ENCODE measurements at regions of chr1 and their contacts with region 1.

Region 1: GRCh38 chr1:86470859-86471258 is 2.1 kb downstream of the CLCA1 start:
- DNase-seq: no peak
- H3K4me3 ChIP-seq: no peak overlapping the region
- H3K4me3 Mint-ChIP-seq: no peak overlapping the region
- H3K27ac ChIP-seq: no peak overlapping the region
- H3K27ac Mint-ChIP-seq: no peak overlapping the region
- H3K4me1 ChIP-seq: no peaks in the 10 kb centered on the region
- H3K4me1 Mint-ChIP-seq: peaks cover 0 to 3% (median 0%) of the 10 kb centered on the region in 4 donors
- H3K27me3 ChIP-seq: peaks cover 3% of the 10 kb centered on the region
- H3K27me3 Mint-ChIP-seq: peaks cover 6 to 7% of the 10 kb centered on the region in 2 donors

Region 2: DNA sequence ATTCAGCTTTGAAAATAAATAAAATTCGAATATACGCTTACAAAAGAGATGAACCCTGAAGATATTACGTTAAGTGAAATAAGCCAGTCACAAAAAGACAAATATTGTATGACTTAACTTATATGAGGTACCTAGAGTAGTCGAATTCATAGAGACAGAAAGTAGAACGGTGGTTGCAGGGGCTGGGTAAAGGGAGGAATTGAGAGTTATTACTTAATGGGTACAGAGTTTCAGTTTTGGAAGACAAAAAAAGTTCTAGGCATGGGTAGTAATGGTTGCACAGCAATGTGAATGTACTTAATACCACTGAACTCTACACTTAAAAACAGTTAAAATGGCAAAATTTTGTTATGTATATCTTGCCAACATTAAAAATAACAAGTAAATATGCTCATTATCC is 714.0 kb before region 1 on chr1:
- CTCF ChIA-PET with region 1: no interaction called
- POLR2A ChIA-PET with region 1: no interaction called
- intact Hi-C with region 1: no loop called
- DNase-seq: no peak
- H3K4me3 ChIP-seq: no peak overlapping the region
- H3K4me3 Mint-ChIP-seq: no peak overlapping the region
- H3K27ac ChIP-seq: no peak overlapping the region
- H3K27ac Mint-ChIP-seq: no peak overlapping the region
- H3K4me1 ChIP-seq: no peaks in the 10 kb centered on the region
- H3K4me1 Mint-ChIP-seq: no peaks in the 10 kb centered on the region
- H3K27me3 ChIP-seq: no peaks in the 10 kb centered on the region
- H3K27me3 Mint-ChIP-seq: no peaks in the 10 kb centered on the region

Region 3: GRCh38 chr1:86419277-86419903 is 51.5 kb before region 1 on chr1:
- CTCF ChIA-PET with region 1: interaction called, 3 read pairs
- POLR2A ChIA-PET with region 1: no interaction called
- intact Hi-C with region 1: loop called (anchors 5 kb)
- DNase-seq: peak; percentile 47 to 62 (median 52)
- H3K4me3 ChIP-seq: no peak overlapping the region
- H3K4me3 Mint-ChIP-seq: peak overlapping the region; percentile 57 to 86 (median 72)
- H3K27ac ChIP-seq: no peak overlapping the region
- H3K27ac Mint-ChIP-seq: peak overlapping the region in 3 of 7 donors; percentile 53 to 83 (median 78)
- H3K4me1 ChIP-seq: no peaks in the 10 kb centered on the region
- H3K4me1 Mint-ChIP-seq: peaks cover 2 to 6% (median 4%) of the 10 kb centered on the region in 4 donors
- H3K27me3 ChIP-seq: no peaks in the 10 kb centered on the region
- H3K27me3 Mint-ChIP-seq: peaks cover 2 to 9% of the 10 kb centered on the region in 2 donors

Region 4: GRCh38 chr1:86507935-86508582 is 37.2 kb after region 1 on chr1:
- CTCF ChIA-PET with region 1: interaction called, 26 read pairs
- POLR2A ChIA-PET with region 1: no interaction called
- intact Hi-C with region 1: loop called (anchors 2 kb)
- DNase-seq: peak in 4 of 5 donors; percentile 14 to 23 (median 17)
- H3K4me3 ChIP-seq: no peak overlapping the region
- H3K4me3 Mint-ChIP-seq: no peak overlapping the region
- H3K27ac ChIP-seq: no peak overlapping the region
- H3K27ac Mint-ChIP-seq: no peak overlapping the region
- H3K4me1 ChIP-seq: no peaks in the 10 kb centered on the region
- H3K4me1 Mint-ChIP-seq: peaks cover 0 to 9% (median 1%) of the 10 kb centered on the region in 4 donors
- H3K27me3 ChIP-seq: no peaks in the 10 kb centered on the region
- H3K27me3 Mint-ChIP-seq: peaks cover 8 to 11% of the 10 kb centered on the region in 2 donors

Region 5: DNA sequence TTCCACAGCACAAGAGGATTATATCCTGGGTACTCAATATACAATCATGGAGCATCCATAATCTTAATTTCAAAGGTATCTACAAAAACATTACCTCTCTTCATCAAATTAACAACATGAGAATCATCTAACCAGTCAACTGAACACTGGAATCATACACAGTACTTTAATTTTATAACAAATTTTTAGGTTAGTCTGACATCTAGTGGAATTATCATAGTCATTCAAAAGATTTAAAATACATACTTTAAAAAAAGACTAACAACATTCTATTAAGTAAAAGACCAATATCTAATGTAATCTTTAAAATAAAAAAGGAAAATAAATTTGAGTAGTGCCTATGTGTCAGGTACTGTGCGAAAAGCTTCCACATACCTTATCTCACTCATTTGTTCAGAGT is 216.7 kb after region 1 on chr1:
- CTCF ChIA-PET with region 1: interaction called, 3 read pairs
- POLR2A ChIA-PET with region 1: no interaction called
- intact Hi-C with region 1: loop called (anchors 10 kb)
- DNase-seq: no peak
- H3K4me3 ChIP-seq: no peak overlapping the region
- H3K4me3 Mint-ChIP-seq: no peak overlapping the region
- H3K27ac ChIP-seq: no peak overlapping the region
- H3K27ac Mint-ChIP-seq: no peak overlapping the region
- H3K4me1 ChIP-seq: no peaks in the 10 kb centered on the region
- H3K4me1 Mint-ChIP-seq: no peaks in the 10 kb centered on the region
- H3K27me3 ChIP-seq: no peaks in the 10 kb centered on the region
- H3K27me3 Mint-ChIP-seq: peaks cover 0 to 1% of the 10 kb centered on the region in 2 donors

Region 6: DNA sequence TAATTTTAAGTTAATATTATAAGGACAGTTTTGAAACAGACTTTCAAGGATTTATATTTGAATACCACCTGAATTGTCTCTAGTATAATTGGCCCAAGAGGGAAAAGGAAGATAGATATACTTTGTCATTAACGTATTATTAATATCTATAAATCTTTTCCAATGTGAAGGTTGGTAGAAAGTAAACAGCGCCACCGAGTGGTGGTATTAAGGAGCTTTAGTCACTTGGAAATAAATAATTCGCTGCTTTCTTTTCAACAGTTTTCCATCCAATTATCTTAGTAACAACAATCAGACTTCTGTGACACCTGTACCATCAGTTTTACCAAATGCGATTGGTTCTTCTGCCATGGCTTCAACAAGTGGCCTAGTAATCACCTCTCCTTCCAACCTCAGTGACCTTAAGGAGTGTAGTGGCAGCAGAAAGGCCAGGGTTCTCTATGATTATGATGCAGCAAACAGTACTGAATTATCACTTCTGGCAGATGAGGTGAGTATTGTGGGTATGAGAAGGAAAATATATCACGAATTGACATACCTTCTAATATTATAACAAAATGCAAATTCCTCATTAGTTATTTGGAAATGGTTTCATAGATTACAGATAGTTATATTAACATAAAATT is 271.2 kb after region 1 on chr1:
- CTCF ChIA-PET with region 1: interaction called, 7 read pairs
- POLR2A ChIA-PET with region 1: no interaction called
- intact Hi-C with region 1: loop called (anchors 1 kb)
- DNase-seq: peak; percentile 11 to 55 (median 40)
- H3K4me3 ChIP-seq: no peak overlapping the region
- H3K4me3 Mint-ChIP-seq: no peak overlapping the region
- H3K27ac ChIP-seq: no peak overlapping the region
- H3K27ac Mint-ChIP-seq: no peak overlapping the region
- H3K4me1 ChIP-seq: peaks cover 24% of the 10 kb centered on the region
- H3K4me1 Mint-ChIP-seq: peaks cover 2 to 4% (median 4%) of the 10 kb centered on the region in 4 donors
- H3K27me3 ChIP-seq: no peaks in the 10 kb centered on the region
- H3K27me3 Mint-ChIP-seq: no peaks in the 10 kb centered on the region

Region 7: DNA sequence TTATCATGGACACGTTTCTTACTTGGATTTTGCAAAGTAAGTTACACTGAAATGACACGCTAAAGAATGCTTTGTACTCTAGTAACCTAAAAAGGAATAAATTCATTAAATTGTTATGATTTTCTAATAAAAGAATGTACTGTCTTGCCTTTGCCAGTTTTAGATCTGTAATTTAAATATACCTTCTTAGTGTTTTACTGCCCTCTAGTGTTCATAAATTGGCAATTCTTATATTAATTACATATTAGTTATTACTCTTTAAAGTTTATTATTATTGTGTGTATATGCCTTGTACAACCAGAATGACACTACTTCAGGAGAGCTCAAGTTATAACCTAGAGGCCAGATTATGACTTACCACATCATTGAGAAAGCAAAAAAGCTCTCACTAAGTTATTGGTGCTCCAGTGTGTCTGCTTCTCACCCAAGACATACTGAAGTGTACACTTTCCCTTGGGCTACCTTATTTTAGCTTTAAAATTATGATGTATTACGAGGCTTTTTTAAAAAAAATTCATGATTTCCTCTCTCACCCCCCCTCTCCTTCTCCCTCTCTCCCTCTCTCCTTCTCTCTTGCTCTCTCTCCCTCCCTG is 613.5 kb after region 1 on chr1:
- CTCF ChIA-PET with region 1: no interaction called
- POLR2A ChIA-PET with region 1: no interaction called
- intact Hi-C with region 1: loop called (anchors 10 kb)
- DNase-seq: peak in 4 of 5 donors; percentile 43 to 46 (median 44)
- H3K4me3 ChIP-seq: no peak overlapping the region
- H3K4me3 Mint-ChIP-seq: no peak overlapping the region
- H3K27ac ChIP-seq: no peak overlapping the region
- H3K27ac Mint-ChIP-seq: no peak overlapping the region
- H3K4me1 ChIP-seq: no peaks in the 10 kb centered on the region
- H3K4me1 Mint-ChIP-seq: peaks cover 0 to 3% (median 1%) of the 10 kb centered on the region in 4 donors
- H3K27me3 ChIP-seq: no peaks in the 10 kb centered on the region
- H3K27me3 Mint-ChIP-seq: no peaks in the 10 kb centered on the region